CD4-positive, alpha-beta T cell (primary cell): ENCODE measurements at regions of chr7 and their contacts with region 1.

Region 1: DNA sequence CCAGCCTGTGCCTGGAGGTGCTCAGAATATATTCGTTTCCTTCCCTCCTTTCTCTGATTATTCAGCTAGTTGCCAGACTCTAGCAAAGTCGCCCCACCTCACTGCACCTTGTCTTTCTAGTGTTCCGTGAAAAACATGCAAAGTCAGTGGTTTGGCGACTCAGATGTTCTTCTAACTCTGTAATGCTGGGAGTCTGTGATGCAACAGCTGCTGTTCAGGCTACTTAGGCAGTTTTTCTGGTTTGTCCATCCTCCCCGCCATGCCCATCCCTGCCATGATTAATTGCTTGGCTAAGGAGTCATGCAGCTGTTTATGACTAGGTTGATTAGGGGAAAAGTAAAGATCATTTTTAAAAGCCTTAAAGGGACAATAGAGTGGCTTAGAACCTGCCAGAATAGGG is 99.4 kb downstream of the MTPN start:
- DNase-seq: no peak
- ATAC-seq: no peak
- H3K4me3 ChIP-seq: no peak overlapping the region
- H3K4me3 Mint-ChIP-seq: no peak overlapping the region
- H3K27ac ChIP-seq: no peak overlapping the region
- H3K27ac Mint-ChIP-seq: no peak overlapping the region
- H3K4me1 ChIP-seq: no peaks in the 10 kb centered on the region
- H3K4me1 Mint-ChIP-seq: no peaks in the 10 kb centered on the region
- H3K27me3 ChIP-seq: no peaks in the 10 kb centered on the region
- H3K27me3 Mint-ChIP-seq: peaks cover 7% of the 10 kb centered on the region
- CTCF ChIP-seq: no peak

Region 2: DNA sequence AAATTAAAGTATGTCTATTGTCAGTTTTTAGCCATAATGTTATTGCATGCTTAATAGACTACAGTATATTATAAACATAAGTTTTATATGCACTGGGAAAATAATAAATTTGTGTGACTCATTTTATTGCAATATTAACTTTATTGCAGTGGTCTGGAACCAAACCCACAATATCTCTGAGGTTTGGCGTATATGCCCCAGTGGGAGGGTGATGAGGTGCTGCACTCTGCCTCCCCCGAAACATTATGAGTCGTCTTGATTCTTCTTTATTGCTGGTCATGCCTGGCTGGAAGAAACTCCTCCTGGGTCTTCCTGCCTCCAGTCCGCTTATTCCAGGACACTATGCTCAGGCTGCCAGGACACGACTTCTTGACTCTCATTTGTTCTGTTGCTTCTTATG is 10.9 kb after region 1 on chr7:
- CTCF ChIA-PET with region 1: no interaction called
- POLR2A ChIA-PET with region 1: no interaction called
- intact Hi-C with region 1: loop called in 1 of 2 experiments (anchors 1 kb)
- DNase-seq: no peak
- ATAC-seq: no peak
- H3K4me3 ChIP-seq: no peak overlapping the region
- H3K4me3 Mint-ChIP-seq: no peak overlapping the region
- H3K27ac ChIP-seq: no peak overlapping the region
- H3K27ac Mint-ChIP-seq: no peak overlapping the region
- H3K4me1 ChIP-seq: no peaks in the 10 kb centered on the region
- H3K4me1 Mint-ChIP-seq: no peaks in the 10 kb centered on the region
- H3K27me3 ChIP-seq: no peaks in the 10 kb centered on the region
- H3K27me3 Mint-ChIP-seq: peaks cover 3% of the 10 kb centered on the region
- CTCF ChIP-seq: no peak

Region 3: GRCh38 chr7:135930565-135931461 is 53.0 kb after region 1 on chr7:
- CTCF ChIA-PET with region 1: no interaction called
- POLR2A ChIA-PET with region 1: no interaction called
- intact Hi-C with region 1: no loop called
- DNase-seq: no peak
- ATAC-seq: no peak
- H3K4me3 ChIP-seq: no peak overlapping the region
- H3K4me3 Mint-ChIP-seq: no peak overlapping the region
- H3K27ac ChIP-seq: no peak overlapping the region
- H3K27ac Mint-ChIP-seq: peak overlapping the region; percentile 57
- H3K4me1 ChIP-seq: peaks cover 14% of the 10 kb centered on the region
- H3K4me1 Mint-ChIP-seq: peaks cover 47% of the 10 kb centered on the region
- H3K27me3 ChIP-seq: no peaks in the 10 kb centered on the region
- H3K27me3 Mint-ChIP-seq: no peaks in the 10 kb centered on the region
- CTCF ChIP-seq: no peak